ENCODE measurements at regions of chr12 and their contacts with region 1.

Region 1: GRCh38 chr12:2583091-2583497 is 211.7 kb upstream of the FKBP4 start:
- DNase-seq: peak; percentile 20
- H3K4me3 ChIP-seq: no peak overlapping the region
- H3K27ac ChIP-seq: no peak overlapping the region
- H3K4me1 ChIP-seq: no peaks in the 10 kb centered on the region
- H3K27me3 ChIP-seq: peaks cover 6% of the 10 kb centered on the region in 2 experiments
- CTCF ChIP-seq: peak; percentile 78 to 85
- POLR2A ChIP-seq: no peak

Region 2: DNA sequence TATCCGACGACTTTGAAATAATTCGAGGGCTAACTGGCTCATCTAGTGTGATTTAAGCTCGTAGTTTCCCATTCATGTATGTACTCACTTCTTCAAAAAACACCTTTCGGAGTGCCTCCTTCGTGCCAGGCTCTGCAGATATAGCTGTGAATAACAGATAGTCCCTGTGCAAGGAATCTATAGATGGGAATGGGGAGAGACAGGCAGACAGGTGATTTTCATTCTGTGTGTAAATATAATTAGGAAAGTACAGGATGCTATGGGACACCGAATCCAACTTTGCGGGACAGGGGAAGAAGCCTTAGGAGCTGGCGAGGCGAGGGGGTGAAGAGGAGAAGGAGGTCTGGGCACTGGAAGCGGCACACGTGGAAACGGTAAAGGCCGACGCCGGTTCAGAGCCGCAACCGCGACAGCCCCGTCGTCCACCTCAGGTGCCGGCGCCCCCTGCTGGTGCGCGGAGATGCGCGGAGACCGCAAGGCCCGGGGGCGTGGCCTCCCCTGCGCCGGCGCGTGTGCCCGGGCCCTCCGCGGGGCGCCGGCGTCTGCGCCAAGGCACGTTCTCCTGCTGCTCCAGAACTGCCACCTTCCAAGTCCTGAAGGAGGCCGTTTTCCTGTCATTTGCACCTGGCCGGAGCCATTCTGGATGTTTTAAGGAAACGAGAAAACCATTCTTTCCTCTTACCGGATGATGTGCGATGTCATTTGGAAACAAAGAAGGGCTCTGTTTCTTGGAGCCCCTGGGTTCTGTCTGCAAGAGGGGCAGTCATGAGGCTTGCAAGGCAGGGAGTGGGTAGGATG is 548.3 kb before region 1 on chr12:
- CTCF ChIA-PET with region 1: interaction called, 5 read pairs
- POLR2A ChIA-PET with region 1: no interaction called
- dilution Hi-C with region 1: no loop called
- intact Hi-C with region 1: loop called (anchors 1 kb)
- DNase-seq: peak; percentile 69
- H3K4me3 ChIP-seq: no peak overlapping the region
- H3K27ac ChIP-seq: no peak overlapping the region
- H3K4me1 ChIP-seq: peaks cover 2% of the 10 kb centered on the region
- H3K27me3 ChIP-seq: peaks cover 12 to 24% of the 10 kb centered on the region in 2 experiments
- CTCF ChIP-seq: peak; percentile 90 to 94
- POLR2A ChIP-seq: no peak

Region 3: GRCh38 chr12:2291182-2291832 is 291.8 kb before region 1 on chr12:
- CTCF ChIA-PET with region 1: no interaction called
- POLR2A ChIA-PET with region 1: no interaction called
- dilution Hi-C with region 1: no loop called
- intact Hi-C with region 1: loop called (anchors 1 kb)
- DNase-seq: peak; percentile 46
- H3K4me3 ChIP-seq: no peak overlapping the region
- H3K27ac ChIP-seq: no peak overlapping the region
- H3K4me1 ChIP-seq: no peaks in the 10 kb centered on the region
- H3K27me3 ChIP-seq: no peaks in the 10 kb centered on the region
- CTCF ChIP-seq: peak; percentile 67 to 69
- POLR2A ChIP-seq: no peak

Region 4: GRCh38 chr12:2526371-2526770 is 56.7 kb before region 1 on chr12:
- CTCF ChIA-PET with region 1: no interaction called
- POLR2A ChIA-PET with region 1: no interaction called
- dilution Hi-C with region 1: no loop called
- intact Hi-C with region 1: no loop called
- DNase-seq: no peak
- H3K4me3 ChIP-seq: no peak overlapping the region
- H3K27ac ChIP-seq: no peak overlapping the region
- H3K4me1 ChIP-seq: no peaks in the 10 kb centered on the region
- H3K27me3 ChIP-seq: no peaks in the 10 kb centered on the region
- CTCF ChIP-seq: no peak
- POLR2A ChIP-seq: no peak

Region 5: GRCh38 chr12:2640705-2641104 is 57.6 kb after region 1 on chr12:
- CTCF ChIA-PET with region 1: interaction called, 12 read pairs
- POLR2A ChIA-PET with region 1: no interaction called
- dilution Hi-C with region 1: no loop called
- intact Hi-C with region 1: loop called (anchors 10 kb)
- DNase-seq: peak; percentile 93
- H3K4me3 ChIP-seq: no peak overlapping the region
- H3K27ac ChIP-seq: peak overlapping the region; percentile 88
- H3K4me1 ChIP-seq: peaks cover 17% of the 10 kb centered on the region
- H3K27me3 ChIP-seq: peaks cover 2 to 6% of the 10 kb centered on the region in 2 experiments
- CTCF ChIP-seq: no peak
- POLR2A ChIP-seq: no peak